ENCODE measurements at regions of chr9 and their contacts with region 1.

Region 1: GRCh38 chr9:68427216-68427977 is 71.0 kb downstream of the PGM5 start:
- DNase-seq: no peak
- ATAC-seq: no peak
- H3K4me3 ChIP-seq: no peak overlapping the region
- H3K27ac ChIP-seq: no peak overlapping the region
- H3K4me1 ChIP-seq: no peaks in the 10 kb centered on the region
- H3K27me3 ChIP-seq: no peaks in the 10 kb centered on the region
- CTCF ChIP-seq: no peak

Region 2: GRCh38 chr9:68446836-68447235 is 19.4 kb after region 1 on chr9:
- CTCF ChIA-PET with region 1: no interaction called
- POLR2A ChIA-PET with region 1: no interaction called
- in situ Hi-C with region 1: no loop called
- intact Hi-C with region 1: loop called (anchors 2 kb)
- DNase-seq: no peak
- ATAC-seq: no peak
- H3K4me3 ChIP-seq: no peak overlapping the region
- H3K27ac ChIP-seq: no peak overlapping the region
- H3K4me1 ChIP-seq: no peaks in the 10 kb centered on the region
- H3K27me3 ChIP-seq: no peaks in the 10 kb centered on the region
- CTCF ChIP-seq: no peak

Region 3: DNA sequence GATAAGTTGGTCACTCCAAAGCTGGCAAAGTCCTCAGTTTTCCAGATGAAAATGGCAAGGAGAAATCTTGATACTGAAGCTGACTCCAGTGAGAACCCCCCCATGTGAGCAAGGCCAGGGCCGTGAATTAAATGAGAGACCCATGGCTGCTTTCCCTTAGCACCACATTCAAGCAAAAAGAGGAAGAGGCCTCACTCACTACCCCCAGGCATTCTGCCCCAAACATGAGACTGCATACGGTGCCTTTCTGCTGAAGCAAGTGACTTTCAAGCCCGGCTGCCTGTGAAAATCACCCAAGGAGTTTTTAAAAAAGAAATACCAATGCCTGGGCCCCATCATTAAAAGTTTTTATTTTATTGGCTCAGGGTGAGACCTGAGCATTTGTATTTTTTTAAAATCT is 46.4 kb after region 1 on chr9:
- CTCF ChIA-PET with region 1: no interaction called
- POLR2A ChIA-PET with region 1: no interaction called
- in situ Hi-C with region 1: no loop called
- intact Hi-C with region 1: loop called (anchors 10 kb)
- DNase-seq: no peak
- ATAC-seq: no peak
- H3K4me3 ChIP-seq: no peak overlapping the region
- H3K27ac ChIP-seq: no peak overlapping the region
- H3K4me1 ChIP-seq: no peaks in the 10 kb centered on the region
- H3K27me3 ChIP-seq: no peaks in the 10 kb centered on the region
- CTCF ChIP-seq: no peak

Measured in Panc1 (cell line).